ENCODE measurements at regions of chr3 and their contacts with region 1.

Region 1: GRCh38 chr3:98182196-98182595 is 15.7 kb downstream of the OR5H15 start:
- DNase-seq: no peak
- ATAC-seq: no peak
- H3K4me3 ChIP-seq: no peak overlapping the region
- H3K27ac ChIP-seq: no peak overlapping the region
- H3K4me1 ChIP-seq: no peaks in the 10 kb centered on the region
- H3K27me3 ChIP-seq: no peaks in the 10 kb centered on the region
- CTCF ChIP-seq: no peak
- POLR2A ChIP-seq: no peak

Region 2: GRCh38 chr3:98140531-98140930 is 41.7 kb before region 1 on chr3:
- intact Hi-C with region 1: loop called in 2 of 10 experiments (anchors 2 kb)
- DNase-seq: no peak
- ATAC-seq: no peak
- H3K4me3 ChIP-seq: no peak overlapping the region
- H3K27ac ChIP-seq: no peak overlapping the region
- H3K4me1 ChIP-seq: no peaks in the 10 kb centered on the region
- H3K27me3 ChIP-seq: no peaks in the 10 kb centered on the region
- CTCF ChIP-seq: no peak
- POLR2A ChIP-seq: no peak